Activated CD8-positive, alpha-beta T cell treated with anti-CD3 and anti-CD28 coated beads for 36 hours (primary cell): ENCODE measurements at regions of chr1 and their contacts with region 1.

Region 1: GRCh38 chr1:228471762-228472398 is 15.3 kb upstream of the RNF187 start:
- DNase-seq: peak; percentile 45
- ATAC-seq: peak; percentile 81
- H3K4me3 Mint-ChIP-seq: no peak overlapping the region
- H3K27ac Mint-ChIP-seq: peak overlapping the region; percentile 47
- H3K4me1 Mint-ChIP-seq: peaks cover 24% of the 10 kb centered on the region
- H3K27me3 Mint-ChIP-seq: peaks cover 14% of the 10 kb centered on the region
- CTCF ChIP-seq: peak; percentile 71

Region 2: DNA sequence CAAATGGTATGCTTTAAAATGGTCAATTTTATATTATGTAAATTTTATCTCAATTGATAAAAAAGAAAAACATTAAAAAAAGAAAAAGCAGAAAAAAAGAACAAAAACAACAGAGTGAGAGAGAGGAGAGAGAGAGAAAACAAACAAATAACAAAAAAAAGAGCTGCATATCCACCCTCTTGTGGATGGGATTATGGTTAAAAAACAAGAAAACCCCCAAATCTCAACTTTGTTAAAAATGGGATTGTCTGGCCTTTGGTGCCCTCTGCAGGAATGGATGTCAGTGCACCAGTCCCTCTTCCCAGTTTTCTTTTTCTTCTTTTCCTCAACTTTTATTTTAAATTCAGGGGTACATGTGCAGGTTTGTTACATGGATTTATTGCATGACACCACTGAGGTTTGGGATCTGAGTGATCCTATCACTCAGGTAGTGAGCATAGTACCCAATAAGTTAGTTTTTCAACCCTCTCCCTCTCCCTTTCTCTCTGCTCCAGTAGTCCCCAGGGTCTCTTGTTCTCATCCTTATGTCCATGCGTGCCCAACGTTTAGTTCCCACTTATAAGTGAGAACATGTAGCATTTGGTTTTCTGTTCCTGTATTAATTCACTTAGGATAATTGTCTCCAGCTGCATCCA is 43.4 kb after region 1 on chr1:
- CTCF ChIA-PET with region 1: interaction called, 5 read pairs
- POLR2A ChIA-PET with region 1: no interaction called
- intact Hi-C with region 1: loop called (anchors 2 kb)
- DNase-seq: peak; percentile 52
- ATAC-seq: peak; percentile 51
- H3K4me3 Mint-ChIP-seq: no peak overlapping the region
- H3K27ac Mint-ChIP-seq: no peak overlapping the region
- H3K4me1 Mint-ChIP-seq: peaks cover 6% of the 10 kb centered on the region
- H3K27me3 Mint-ChIP-seq: peaks cover 12% of the 10 kb centered on the region
- CTCF ChIP-seq: peak; percentile 83